Natural killer cell (primary cell): ENCODE measurements at regions of chr9 and their contacts with region 1.

Region 1: DNA sequence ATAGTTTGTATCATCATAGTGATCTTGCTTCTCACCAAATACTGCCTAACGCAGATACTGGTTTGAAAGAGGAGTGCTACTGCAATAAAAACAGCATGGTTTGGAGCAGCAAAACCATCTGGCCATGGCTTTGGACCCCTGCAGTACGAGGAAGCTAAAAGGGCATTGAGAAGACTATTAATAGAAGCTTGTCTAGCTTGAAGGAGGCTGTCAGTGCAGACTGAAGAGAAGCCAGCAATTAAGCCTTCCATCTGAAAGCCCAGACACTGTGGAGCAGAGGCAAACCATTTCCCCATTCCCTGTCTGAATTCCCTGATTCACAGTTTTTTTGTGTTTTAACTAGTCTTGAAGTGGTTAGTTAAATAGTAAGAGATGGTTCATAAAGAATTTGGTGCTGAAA is 281.6 kb downstream of the PTPRD start:
- DNase-seq: no peak
- ATAC-seq: no peak
- H3K4me3 ChIP-seq: no peak overlapping the region
- H3K4me3 Mint-ChIP-seq: no peak overlapping the region
- H3K27ac ChIP-seq: no peak overlapping the region
- H3K27ac Mint-ChIP-seq: no peak overlapping the region
- H3K4me1 ChIP-seq: no peaks in the 10 kb centered on the region
- H3K4me1 Mint-ChIP-seq: no peaks in the 10 kb centered on the region
- H3K27me3 ChIP-seq: no peaks in the 10 kb centered on the region
- H3K27me3 Mint-ChIP-seq: no peaks in the 10 kb centered on the region
- CTCF ChIP-seq: no peak

Region 2: GRCh38 chr9:10371824-10372223 is 40.7 kb after region 1 on chr9:
- intact Hi-C with region 1: loop called (anchors 10 kb)
- DNase-seq: no peak
- ATAC-seq: no peak
- H3K4me3 ChIP-seq: no peak overlapping the region
- H3K4me3 Mint-ChIP-seq: no peak overlapping the region
- H3K27ac ChIP-seq: no peak overlapping the region
- H3K27ac Mint-ChIP-seq: no peak overlapping the region
- H3K4me1 ChIP-seq: no peaks in the 10 kb centered on the region
- H3K4me1 Mint-ChIP-seq: no peaks in the 10 kb centered on the region
- H3K27me3 ChIP-seq: no peaks in the 10 kb centered on the region
- H3K27me3 Mint-ChIP-seq: no peaks in the 10 kb centered on the region
- CTCF ChIP-seq: no peak

Region 3: DNA sequence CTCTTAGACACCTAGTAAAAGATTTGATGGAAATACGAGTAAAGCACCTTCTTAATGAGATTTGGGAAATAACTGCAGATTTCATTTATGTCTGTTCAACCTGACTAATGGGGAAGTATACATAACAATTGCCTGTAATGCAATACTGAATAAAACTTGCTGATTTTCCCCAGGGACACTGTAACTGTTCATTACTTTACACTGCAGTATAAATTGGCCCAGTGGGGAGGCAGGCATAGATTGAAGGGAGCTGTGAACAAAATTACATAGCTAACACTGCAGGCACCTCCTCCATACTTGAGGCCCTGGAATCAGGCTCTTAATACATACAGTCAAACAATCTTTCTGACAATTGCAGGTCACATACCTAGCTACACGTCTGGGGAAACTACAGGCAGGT is 65.5 kb after region 1 on chr9:
- intact Hi-C with region 1: loop called (anchors 10 kb)
- DNase-seq: no peak
- ATAC-seq: no peak
- H3K4me3 ChIP-seq: no peak overlapping the region
- H3K4me3 Mint-ChIP-seq: no peak overlapping the region
- H3K27ac ChIP-seq: no peak overlapping the region
- H3K27ac Mint-ChIP-seq: no peak overlapping the region
- H3K4me1 ChIP-seq: no peaks in the 10 kb centered on the region
- H3K4me1 Mint-ChIP-seq: no peaks in the 10 kb centered on the region
- H3K27me3 ChIP-seq: no peaks in the 10 kb centered on the region
- H3K27me3 Mint-ChIP-seq: no peaks in the 10 kb centered on the region
- CTCF ChIP-seq: no peak